ENCODE measurements at regions of chr9 and their contacts with region 1.

Region 1: DNA sequence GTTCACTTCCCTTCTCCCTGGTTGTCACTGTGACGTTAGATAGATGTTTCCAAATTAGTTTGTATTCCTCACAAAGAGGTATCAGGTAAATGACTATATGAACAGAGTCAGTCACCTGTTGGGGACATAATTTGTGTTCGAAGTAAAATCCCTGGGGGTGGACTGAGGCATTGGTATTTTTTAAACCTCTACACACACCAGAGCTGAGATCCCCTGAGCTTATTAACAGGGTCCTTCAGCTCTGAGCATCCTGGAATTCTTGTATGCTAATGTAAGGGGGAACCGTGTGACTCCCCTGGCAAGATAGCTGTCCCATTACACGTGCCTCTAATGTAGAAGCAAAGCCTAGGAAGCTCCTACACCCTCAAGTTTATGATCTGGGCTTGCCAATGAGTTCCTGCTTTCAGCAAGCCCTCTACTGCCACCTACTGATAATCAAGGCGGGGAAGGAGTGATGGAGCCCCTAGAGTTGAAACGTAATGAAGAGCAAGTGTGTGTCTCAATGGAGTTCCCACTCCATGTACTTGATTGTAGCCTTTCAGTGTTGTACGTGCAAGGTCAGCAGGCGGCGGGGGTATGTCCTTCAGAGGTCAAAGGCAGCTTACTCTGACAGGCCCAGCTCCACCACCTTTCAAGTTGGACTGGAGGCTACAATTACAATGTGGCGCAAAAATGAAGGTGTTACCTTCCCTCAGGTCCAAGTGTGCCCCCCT is 14.4 kb downstream of the PRKACG start:
- DNase-seq: peak; percentile 73
- H3K4me3 ChIP-seq: no peak overlapping the region
- H3K27ac ChIP-seq: no peak overlapping the region
- H3K4me1 ChIP-seq: peaks cover 0 to 15% (median 3%) of the 10 kb centered on the region in 4 donors
- H3K27me3 ChIP-seq: no peaks in the 10 kb centered on the region
- CTCF ChIP-seq: peak; percentile 72 to 82 (median 75)
- EP300 ChIP-seq: no peak
- POLR2A ChIP-seq: no peak

Region 2: DNA sequence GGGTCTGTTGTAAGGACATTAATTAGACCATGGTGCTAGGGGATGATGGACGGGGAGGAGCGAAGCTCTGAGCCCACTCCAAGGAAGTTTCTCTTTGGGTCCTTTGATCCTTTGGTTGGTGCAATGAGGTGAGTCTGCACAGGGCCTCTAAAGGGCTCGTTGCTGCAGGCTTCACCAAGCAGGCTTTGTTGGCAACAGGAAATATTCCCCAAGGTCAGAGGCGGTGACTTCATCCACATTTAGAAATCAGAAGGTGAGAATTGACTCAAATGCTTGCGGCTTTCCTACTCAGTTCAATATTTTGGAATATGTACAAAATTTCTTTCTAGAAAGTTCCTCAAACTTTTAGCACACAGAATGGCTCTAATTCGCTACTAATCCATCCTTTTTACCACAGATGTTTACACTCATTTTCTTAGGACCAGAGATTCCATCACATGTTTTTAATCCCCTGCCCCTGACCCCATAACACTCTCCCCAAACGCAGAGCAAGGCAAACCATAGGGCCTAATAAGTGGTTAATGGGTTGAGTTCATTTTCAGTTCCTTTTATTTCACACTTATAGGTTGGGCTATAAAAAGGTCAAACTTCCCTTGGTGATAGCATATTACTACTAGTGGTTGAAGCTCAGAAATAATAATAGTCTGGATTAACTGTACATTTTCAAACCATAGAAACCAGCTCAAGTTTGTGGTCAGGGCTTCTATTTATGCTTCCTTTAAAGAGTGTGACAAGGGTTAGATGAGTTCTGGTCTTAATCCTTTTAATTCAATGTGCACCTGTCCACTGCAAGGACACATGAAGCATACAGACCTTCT is 421.6 kb before region 1 on chr9:
- in situ Hi-C with region 1: loop called (anchors 5 to 25 kb)
- intact Hi-C with region 1: loop called (anchors 1 kb)
- DNase-seq: no peak
- H3K4me3 ChIP-seq: no peak overlapping the region
- H3K27ac ChIP-seq: no peak overlapping the region
- H3K4me1 ChIP-seq: no peaks in the 10 kb centered on the region
- H3K27me3 ChIP-seq: no peaks in the 10 kb centered on the region
- CTCF ChIP-seq: no peak
- EP300 ChIP-seq: no peak
- POLR2A ChIP-seq: no peak

Region 3: DNA sequence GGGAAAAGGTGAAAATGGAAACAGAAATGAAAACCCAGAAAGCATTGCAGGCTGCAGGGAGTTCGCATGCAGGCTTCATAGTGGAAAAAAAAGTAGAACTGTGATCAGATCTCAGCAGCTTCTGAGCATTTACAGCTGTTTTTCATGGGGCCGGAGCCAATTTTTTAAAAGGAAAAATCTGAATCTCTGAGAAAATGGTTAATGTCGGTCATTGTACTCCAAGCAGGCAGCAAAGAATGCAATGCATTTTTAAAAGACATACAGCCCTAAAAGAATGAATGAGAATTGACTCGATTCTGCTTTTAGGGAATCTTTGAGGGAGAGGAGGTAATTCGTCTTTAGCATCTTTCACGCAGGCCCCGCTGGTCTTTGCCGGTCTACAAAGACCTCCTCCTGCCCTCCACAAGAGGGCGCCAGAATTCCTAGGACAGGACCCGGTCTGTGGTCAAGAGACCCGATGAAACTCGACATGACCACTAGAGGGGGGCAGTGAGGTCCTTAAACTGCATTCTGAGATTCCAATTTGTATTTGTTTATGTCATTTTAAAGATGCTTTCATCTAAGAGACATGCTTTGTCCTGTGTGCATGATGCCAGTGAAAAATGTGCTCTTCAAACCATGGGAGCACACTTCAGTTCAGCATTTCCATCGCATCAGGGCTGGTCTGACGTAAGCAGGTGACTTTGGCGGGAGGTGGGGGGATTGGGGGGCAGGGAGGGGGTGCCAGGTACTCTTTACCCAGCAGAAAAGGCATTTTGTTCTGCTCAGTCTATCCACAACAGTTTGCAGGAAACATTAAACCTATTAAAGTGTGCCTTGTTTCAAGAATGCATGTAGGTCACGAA is 415.1 kb before region 1 on chr9:
- in situ Hi-C with region 1: loop called (anchors 5 to 25 kb)
- intact Hi-C with region 1: no loop called
- DNase-seq: peak; percentile 87
- H3K4me3 ChIP-seq: no peak overlapping the region
- H3K27ac ChIP-seq: no peak overlapping the region
- H3K4me1 ChIP-seq: no peaks in the 10 kb centered on the region
- H3K27me3 ChIP-seq: no peaks in the 10 kb centered on the region
- CTCF ChIP-seq: peak; percentile 97 to 99 (median 97)
- EP300 ChIP-seq: no peak
- POLR2A ChIP-seq: no peak

Region 4: GRCh38 chr9:68685770-68686169 is 313.8 kb before region 1 on chr9:
- in situ Hi-C with region 1: loop called in 1 of 4 experiments (anchors 10 kb)
- intact Hi-C with region 1: no loop called
- DNase-seq: peak; percentile 67
- H3K4me3 ChIP-seq: no peak overlapping the region
- H3K27ac ChIP-seq: no peak overlapping the region
- H3K4me1 ChIP-seq: no peaks in the 10 kb centered on the region
- H3K27me3 ChIP-seq: peaks cover 4% of the 10 kb centered on the region
- CTCF ChIP-seq: peak; percentile 44 to 67 (median 49)
- EP300 ChIP-seq: no peak
- POLR2A ChIP-seq: no peak

Region 5: DNA sequence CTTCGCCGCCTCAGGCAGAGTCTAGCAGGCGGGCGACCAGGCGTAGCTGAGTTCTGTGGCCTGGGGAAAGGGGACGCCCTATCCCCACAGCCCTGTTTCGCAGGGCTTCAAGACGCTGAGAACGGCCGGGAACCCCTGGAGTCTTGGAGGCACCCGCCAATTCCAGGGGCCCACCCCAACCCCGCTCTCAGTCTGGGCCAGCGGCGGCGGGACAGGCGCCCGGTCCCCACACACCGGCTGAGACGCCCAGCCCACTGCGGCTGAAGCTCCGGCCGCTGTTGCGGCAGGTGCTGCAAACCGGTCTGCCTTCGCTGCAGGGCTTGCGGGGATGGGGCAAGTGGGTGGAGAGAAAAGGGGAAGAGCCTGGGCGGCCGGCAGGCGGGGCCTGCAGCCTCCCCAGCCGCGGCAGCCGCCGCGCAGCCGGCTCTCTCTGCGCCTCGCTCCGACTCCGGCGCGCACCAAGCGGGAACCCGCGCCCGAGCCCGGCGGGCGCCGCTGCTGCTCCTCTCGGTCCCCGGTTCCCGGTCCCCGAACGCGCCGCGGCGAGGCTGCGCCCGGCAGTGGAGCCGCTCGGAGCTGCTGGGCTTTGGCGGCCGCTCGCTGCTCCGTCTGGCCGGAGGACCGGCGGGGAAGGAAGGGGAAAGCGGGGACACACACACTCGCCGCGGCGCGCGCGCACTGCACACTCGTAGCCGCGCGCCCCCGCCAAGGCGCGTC is 294.6 kb before region 1 on chr9 and contains the start of gene PIP5K1B:
- in situ Hi-C with region 1: loop called in 1 of 4 experiments (anchors 25 kb)
- intact Hi-C with region 1: loop called (anchors 5 kb)
- DNase-seq: peak; percentile 90
- H3K4me3 ChIP-seq: peak within 1 kb of the TSS; percentile 39 to 88 (median 68)
- H3K27ac ChIP-seq: peak within 1 kb of the TSS; percentile 94 to 95 (median 94)
- H3K4me1 ChIP-seq: peaks cover 0 to 30% (median 19%) of the 10 kb centered on the region in 4 donors
- H3K27me3 ChIP-seq: peaks cover 3% of the 10 kb centered on the region
- CTCF ChIP-seq: peak in 1 of 5 experiments; percentile 11
- EP300 ChIP-seq: no peak
- POLR2A ChIP-seq: peak; percentile 91
- total RNA-seq, gene PIP5K1B: 45.6 to 104 (median 76.0) TPM

Region 6: DNA sequence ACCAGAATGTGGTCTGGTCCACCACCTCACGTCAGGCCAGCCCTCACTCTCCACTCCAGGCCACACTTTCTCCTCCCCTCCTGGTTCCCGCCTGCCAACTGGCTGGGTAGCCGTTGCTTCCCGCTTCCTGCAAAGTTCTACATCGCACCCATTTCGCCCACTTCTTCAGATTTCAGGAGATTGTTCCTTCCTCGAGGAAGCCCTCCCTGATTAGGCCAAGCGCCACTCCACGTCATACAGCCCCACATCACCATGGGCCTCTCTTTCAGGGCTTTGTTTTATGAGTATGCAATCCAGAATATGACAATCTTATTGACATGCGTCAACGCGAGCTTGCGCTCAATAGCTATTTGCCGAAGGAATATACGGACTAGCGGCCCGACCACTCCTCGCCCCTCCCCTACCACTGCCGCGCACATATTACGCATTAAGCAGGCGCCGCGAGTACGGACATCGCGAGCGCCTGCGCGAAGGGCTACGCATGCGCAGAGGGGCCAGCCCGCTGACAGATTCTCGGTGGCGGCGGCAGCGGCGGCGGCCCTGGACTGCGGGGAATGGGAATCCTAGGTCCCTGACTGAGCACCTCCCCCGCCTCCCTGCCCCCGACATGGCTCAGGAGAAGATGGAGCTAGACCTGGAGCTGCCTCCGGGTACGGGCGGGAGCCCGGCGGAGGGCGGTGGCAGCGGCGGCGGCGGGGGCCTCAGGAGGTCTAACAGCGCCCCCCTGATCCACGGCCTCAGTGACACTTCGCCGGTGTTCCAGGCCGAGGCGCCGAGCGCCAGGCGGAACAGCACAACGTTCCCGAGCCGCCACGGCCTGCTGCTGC is 219.8 kb before region 1 on chr9:
- in situ Hi-C with region 1: loop called in 1 of 4 experiments (anchors 25 kb)
- intact Hi-C with region 1: loop called (anchors 5 kb)
- DNase-seq: peak; percentile 95
- H3K4me3 ChIP-seq: peak overlapping the region; percentile 47 to 81 (median 63)
- H3K27ac ChIP-seq: peak overlapping the region; percentile 92 to 96 (median 94)
- H3K4me1 ChIP-seq: peaks cover 33 to 66% (median 54%) of the 10 kb centered on the region in 4 donors
- H3K27me3 ChIP-seq: no peaks in the 10 kb centered on the region
- CTCF ChIP-seq: peak in 3 of 5 experiments; percentile 9 to 35 (median 18)
- EP300 ChIP-seq: no peak
- POLR2A ChIP-seq: peak; percentile 86

Region 7: GRCh38 chr9:68933434-68934328 is 65.9 kb before region 1 on chr9:
- in situ Hi-C with region 1: no loop called
- intact Hi-C with region 1: no loop called
- DNase-seq: no peak
- H3K4me3 ChIP-seq: no peak overlapping the region
- H3K27ac ChIP-seq: peak overlapping the region in 2 of 4 donors; percentile 18 to 59
- H3K4me1 ChIP-seq: no peaks in the 10 kb centered on the region
- H3K27me3 ChIP-seq: no peaks in the 10 kb centered on the region
- CTCF ChIP-seq: no peak
- EP300 ChIP-seq: no peak
- POLR2A ChIP-seq: no peak

Region 8: DNA sequence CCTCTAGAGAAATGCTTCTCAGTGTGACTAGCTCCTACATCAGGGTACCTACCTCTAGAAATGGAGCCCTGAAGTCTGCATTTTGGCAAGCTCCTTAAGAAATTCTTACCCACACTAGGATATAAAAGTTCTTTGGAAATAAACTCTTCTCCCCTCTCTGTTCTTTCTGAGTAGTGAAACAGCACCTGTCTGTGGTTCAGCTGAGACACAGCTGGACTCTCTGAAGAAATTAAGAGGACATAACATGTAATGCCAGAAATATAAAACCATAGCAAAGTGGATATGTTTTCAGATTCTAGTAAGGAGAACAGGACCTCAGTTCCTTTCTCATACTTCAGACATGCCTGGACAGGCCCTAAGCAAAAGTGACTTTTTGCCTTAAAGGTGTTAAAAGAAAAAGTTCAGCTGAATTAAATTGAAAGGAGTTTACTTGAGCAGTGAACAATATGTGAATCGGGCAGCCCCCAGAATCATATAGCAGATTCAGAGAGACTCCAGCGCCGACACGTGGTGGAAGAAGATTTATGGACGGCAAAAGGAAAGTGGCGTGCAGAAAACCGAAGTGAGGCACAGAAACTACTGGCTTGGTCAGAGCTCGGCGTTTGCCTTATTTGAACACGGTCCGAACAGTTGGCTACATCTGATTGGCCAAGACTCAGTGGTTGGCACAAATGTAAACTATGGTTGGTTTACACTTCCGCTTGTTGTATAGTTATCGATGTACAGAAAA is 50.1 kb before region 1 on chr9:
- in situ Hi-C with region 1: loop called in 1 of 4 experiments (anchors 10 kb)
- intact Hi-C with region 1: no loop called
- DNase-seq: peak; percentile 34
- H3K4me3 ChIP-seq: no peak overlapping the region
- H3K27ac ChIP-seq: peak overlapping the region in 1 of 4 donors; percentile 0
- H3K4me1 ChIP-seq: no peaks in the 10 kb centered on the region
- H3K27me3 ChIP-seq: no peaks in the 10 kb centered on the region
- CTCF ChIP-seq: no peak
- EP300 ChIP-seq: no peak
- POLR2A ChIP-seq: no peak

Measured in transverse colon (tissue), 4 donors.